SK-N-SH (cell line): ENCODE measurements at regions of chr18 and their contacts with region 1.

Region 1: GRCh38 chr18:48663931-48664847 is 125.4 kb downstream of the CTIF start:
- DNase-seq: peak; percentile 84
- H3K4me3 ChIP-seq: no peak overlapping the region; a peak in 1 of 4 replicates
- H3K27ac ChIP-seq: no peak overlapping the region
- H3K4me1 ChIP-seq: peaks cover 17 to 36% of the 10 kb centered on the region in 2 experiments
- H3K27me3 ChIP-seq: no peaks in the 10 kb centered on the region
- CTCF ChIP-seq: peak; percentile 83
- EP300 ChIP-seq: no peak
- RAD21 ChIP-seq: peak; percentile 84

Region 2: GRCh38 chr18:48493434-48494230 is 170.6 kb before region 1 on chr18:
- CTCF ChIA-PET with region 1: interaction called, 11 read pairs
- POLR2A ChIA-PET with region 1: no interaction called
- DNase-seq: no peak
- H3K4me3 ChIP-seq: no peak overlapping the region; a peak in 1 of 4 replicates
- H3K27ac ChIP-seq: no peak overlapping the region
- H3K4me1 ChIP-seq: no peaks in the 10 kb centered on the region; a peak in 1 of 4 replicates
- H3K27me3 ChIP-seq: no peaks in the 10 kb centered on the region
- CTCF ChIP-seq: no peak
- EP300 ChIP-seq: no peak
- RAD21 ChIP-seq: no peak

Region 3: DNA sequence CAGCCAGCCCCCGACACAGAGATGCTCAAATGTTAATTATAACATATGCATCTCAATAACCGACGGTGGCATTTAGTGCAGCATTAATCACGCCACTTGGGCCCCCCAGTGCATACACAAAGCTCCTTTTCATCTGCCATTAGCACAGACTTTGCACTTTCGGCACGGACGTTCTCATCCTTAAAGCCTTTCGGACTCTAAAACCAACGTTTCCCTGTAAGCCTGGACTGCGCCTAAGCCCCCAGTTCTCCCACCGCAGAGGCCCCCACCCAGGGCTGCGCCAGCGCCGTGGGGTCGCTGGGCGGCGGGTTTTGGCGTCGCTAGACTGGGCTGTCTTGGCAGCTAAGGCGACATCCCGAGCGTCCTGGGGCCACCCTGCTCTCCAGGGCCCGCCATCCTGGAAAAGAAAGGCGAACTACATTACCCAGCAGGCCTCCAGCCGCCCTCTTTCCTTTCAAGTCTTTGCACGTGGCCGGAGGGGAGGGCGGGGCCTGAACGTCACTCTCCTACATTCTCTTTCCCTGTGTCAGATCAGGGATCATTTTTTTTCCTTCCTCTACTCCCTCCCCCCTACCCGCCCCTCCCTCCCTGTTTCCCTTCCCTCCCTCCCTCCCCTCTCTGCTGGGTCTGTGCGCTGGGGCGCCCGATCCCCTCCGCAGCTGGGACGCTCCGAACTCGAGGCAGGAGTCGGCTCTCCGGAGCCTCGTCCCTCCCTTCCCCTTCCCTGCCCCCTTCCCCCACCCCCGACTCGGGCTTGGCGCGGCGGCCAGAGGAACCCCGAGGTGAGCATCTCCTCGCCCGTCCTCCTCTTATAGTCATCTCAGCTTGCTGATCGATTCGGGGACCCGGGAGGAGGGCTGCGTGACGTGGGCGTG is 125.4 kb before region 1 on chr18 and contains the start of gene CTIF:
- CTCF ChIA-PET with region 1: interaction called, 10 read pairs
- POLR2A ChIA-PET with region 1: no interaction called
- DNase-seq: peak; percentile 94
- H3K4me3 ChIP-seq: peak within 1 kb of the TSS; percentile 84 to 94
- H3K27ac ChIP-seq: peak within 1 kb of the TSS; percentile 87 to 92
- H3K4me1 ChIP-seq: peaks cover 19% of the 10 kb centered on the region in 2 experiments; a peak in 3 of 4 replicates
- H3K27me3 ChIP-seq: no peaks in the 10 kb centered on the region
- CTCF ChIP-seq: no peak
- EP300 ChIP-seq: no peak; a peak in 1 of 4 replicates
- RAD21 ChIP-seq: no peak
- polyA plus RNA-seq, gene CTIF: 47.2 and 47.8 TPM in 2 replicates

Region 4: GRCh38 chr18:48605408-48605845 is 58.8 kb before region 1 on chr18:
- CTCF ChIA-PET with region 1: interaction called, 10 read pairs
- POLR2A ChIA-PET with region 1: no interaction called
- DNase-seq: peak; percentile 58
- H3K4me3 ChIP-seq: no peak overlapping the region
- H3K27ac ChIP-seq: peak overlapping the region in 1 of 2 experiments; percentile 3; a peak in 1 of 4 replicates
- H3K4me1 ChIP-seq: peaks cover 24 to 37% of the 10 kb centered on the region in 2 experiments; a peak in 3 of 4 replicates
- H3K27me3 ChIP-seq: no peaks in the 10 kb centered on the region
- CTCF ChIP-seq: peak; percentile 32
- EP300 ChIP-seq: no peak
- RAD21 ChIP-seq: peak; percentile 58

Region 5: DNA sequence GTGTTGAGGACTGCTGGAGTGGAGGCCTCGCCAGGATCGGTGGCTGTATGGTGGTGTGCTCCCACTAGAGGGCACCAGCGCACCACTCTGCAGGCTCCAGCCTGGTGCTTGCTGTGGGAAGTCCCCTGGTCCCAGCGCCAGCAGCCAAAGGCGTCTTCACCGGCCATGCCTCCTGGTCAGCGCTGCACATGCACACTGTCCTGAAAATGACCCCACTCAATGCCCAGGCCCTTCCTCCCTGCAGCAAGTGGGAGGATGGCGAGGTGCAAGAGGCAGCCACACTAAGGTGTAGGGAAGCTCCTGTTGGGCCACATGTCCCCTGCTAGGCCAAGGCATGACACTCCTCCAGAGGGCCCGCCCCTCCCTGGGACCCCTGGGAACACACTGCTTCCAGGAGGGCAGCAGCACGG is 11.2 kb after region 1 on chr18:
- CTCF ChIA-PET with region 1: interaction called, 10 read pairs
- POLR2A ChIA-PET with region 1: no interaction called
- DNase-seq: peak; percentile 90
- H3K4me3 ChIP-seq: no peak overlapping the region; a peak in 1 of 4 replicates
- H3K27ac ChIP-seq: peak overlapping the region in 1 of 2 experiments; percentile 39; a peak in 1 of 4 replicates
- H3K4me1 ChIP-seq: peaks cover 7 to 19% of the 10 kb centered on the region in 2 experiments; a peak in 2 of 4 replicates
- H3K27me3 ChIP-seq: no peaks in the 10 kb centered on the region
- CTCF ChIP-seq: peak; percentile 87
- EP300 ChIP-seq: no peak
- RAD21 ChIP-seq: peak; percentile 96